Activated CD4-positive, alpha-beta memory T cell treated with anti-CD3 and anti-CD28 coated beads for 36 hours (primary cell): ENCODE measurements at regions of chr10 and their contacts with region 1.

Region 1: GRCh38 chr10:97572214-97572989 is at the start of gene ANKRD2:
- DNase-seq: peak; percentile 70
- H3K4me3 Mint-ChIP-seq: no peak within 1 kb of the TSS
- H3K27ac Mint-ChIP-seq: no peak within 1 kb of the TSS
- H3K4me1 Mint-ChIP-seq: no peaks in the 10 kb centered on the region
- H3K27me3 Mint-ChIP-seq: no peaks in the 10 kb centered on the region
- total RNA-seq, gene ANKRD2: not detected

Region 2: DNA sequence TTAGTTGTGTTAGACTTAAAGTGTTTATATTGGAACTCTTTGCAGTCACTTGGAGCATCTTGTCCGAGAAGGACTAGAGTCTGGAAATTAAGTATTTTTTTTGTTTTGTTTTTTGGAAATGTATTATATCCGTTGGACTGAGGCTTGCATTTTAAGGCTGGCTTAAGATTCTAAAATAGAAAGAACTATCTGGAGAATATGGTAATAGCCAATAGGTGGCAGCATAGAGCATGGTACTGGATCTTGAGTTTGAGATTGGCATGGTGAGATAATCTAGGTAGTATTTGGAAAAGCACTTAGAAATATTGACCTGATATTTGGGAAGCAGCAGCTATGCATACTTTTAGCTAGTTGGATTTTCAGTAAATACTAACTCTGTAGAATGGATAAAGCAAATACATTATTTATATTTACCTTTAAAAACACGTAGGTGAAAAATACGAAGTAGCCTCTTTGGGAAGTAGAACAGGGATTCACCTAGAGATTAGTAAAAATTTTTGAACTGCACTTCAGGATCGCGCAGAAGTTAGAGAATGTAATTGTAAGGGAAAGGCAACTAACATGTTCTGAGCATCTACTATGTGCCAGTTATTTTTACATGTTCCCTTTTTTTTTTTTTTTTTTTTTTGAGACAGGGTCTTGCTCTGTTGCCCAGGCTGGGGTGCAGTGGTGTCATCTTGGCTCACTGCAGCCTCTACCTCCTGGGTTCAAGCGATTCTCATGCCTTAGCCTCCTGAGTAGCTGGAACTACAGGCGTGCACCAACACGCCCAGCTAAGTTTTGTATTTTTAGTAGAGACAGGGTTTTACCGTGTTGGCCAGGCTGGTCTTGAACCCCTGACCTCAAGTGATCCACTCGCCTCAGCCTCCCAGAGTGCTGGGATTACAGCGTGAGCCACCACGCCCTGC is 661.7 kb before region 1 on chr10:
- CTCF ChIA-PET with region 1: no interaction called
- POLR2A ChIA-PET with region 1: no interaction called
- intact Hi-C with region 1: no loop called
- DNase-seq: no peak
- H3K4me3 Mint-ChIP-seq: no peak overlapping the region
- H3K27ac Mint-ChIP-seq: no peak overlapping the region
- H3K4me1 Mint-ChIP-seq: peaks cover 23% of the 10 kb centered on the region
- H3K27me3 Mint-ChIP-seq: no peaks in the 10 kb centered on the region

Region 3: GRCh38 chr10:97534746-97535367 is 37.5 kb before region 1 on chr10:
- CTCF ChIA-PET with region 1: interaction called, 18 read pairs
- POLR2A ChIA-PET with region 1: no interaction called
- intact Hi-C with region 1: no loop called
- DNase-seq: peak; percentile 65
- H3K4me3 Mint-ChIP-seq: no peak overlapping the region
- H3K27ac Mint-ChIP-seq: no peak overlapping the region
- H3K4me1 Mint-ChIP-seq: no peaks in the 10 kb centered on the region
- H3K27me3 Mint-ChIP-seq: no peaks in the 10 kb centered on the region

Region 4: GRCh38 chr10:97553575-97554031 is 18.8 kb before region 1 on chr10:
- CTCF ChIA-PET with region 1: interaction called, 11 read pairs
- POLR2A ChIA-PET with region 1: no interaction called
- intact Hi-C with region 1: no loop called
- DNase-seq: peak; percentile 75
- H3K4me3 Mint-ChIP-seq: no peak overlapping the region
- H3K27ac Mint-ChIP-seq: no peak overlapping the region
- H3K4me1 Mint-ChIP-seq: no peaks in the 10 kb centered on the region
- H3K27me3 Mint-ChIP-seq: no peaks in the 10 kb centered on the region

Region 5: DNA sequence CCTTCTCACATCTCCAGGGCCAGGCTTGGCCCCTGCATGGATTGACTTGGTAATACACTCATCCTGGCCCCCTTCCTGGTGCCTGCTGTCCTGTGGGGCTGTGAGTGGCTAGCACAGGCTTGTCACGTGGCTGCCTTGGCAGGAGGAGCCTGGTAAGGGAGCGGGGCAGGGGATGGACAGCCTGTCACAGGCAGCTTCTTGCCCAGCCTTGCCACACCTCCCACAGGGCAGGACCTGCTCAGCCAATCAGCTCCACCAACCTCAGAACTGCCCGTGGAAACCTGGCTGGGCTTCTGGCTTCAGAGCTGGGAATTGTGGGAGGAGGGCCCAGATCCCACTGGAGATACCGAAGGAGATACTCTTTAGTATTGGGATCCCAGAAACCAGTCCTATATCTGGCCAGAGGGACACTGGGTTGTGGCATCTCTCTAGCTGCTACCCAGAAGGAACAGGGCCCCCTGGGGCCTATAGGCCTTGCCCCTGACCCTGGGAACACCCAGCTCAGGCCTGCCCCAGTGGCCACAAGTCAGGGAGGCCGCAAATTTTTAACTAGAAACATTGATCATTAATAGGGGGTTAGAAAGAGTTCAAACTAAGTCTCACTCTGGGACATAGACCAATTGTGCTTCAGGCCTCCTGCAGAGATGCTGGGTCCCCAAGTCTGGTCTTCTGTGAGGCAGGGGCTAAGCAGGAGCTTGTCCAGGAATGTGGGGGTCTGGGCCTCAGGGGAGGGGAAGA is 11.8 kb after region 1 on chr10 and contains the start of gene HOGA1:
- CTCF ChIA-PET with region 1: interaction called, 12 read pairs
- POLR2A ChIA-PET with region 1: no interaction called
- intact Hi-C with region 1: no loop called
- DNase-seq: no peak
- H3K4me3 Mint-ChIP-seq: no peak within 1 kb of the TSS
- H3K27ac Mint-ChIP-seq: no peak within 1 kb of the TSS
- H3K4me1 Mint-ChIP-seq: no peaks in the 10 kb centered on the region
- H3K27me3 Mint-ChIP-seq: no peaks in the 10 kb centered on the region
- total RNA-seq, gene HOGA1: not detected

Region 6: GRCh38 chr10:97612386-97612785 is 40.0 kb after region 1 on chr10:
- CTCF ChIA-PET with region 1: interaction called, 16 read pairs
- POLR2A ChIA-PET with region 1: no interaction called
- intact Hi-C with region 1: loop called (anchors 2 kb)
- DNase-seq: no peak
- H3K4me3 Mint-ChIP-seq: no peak overlapping the region
- H3K27ac Mint-ChIP-seq: no peak overlapping the region
- H3K4me1 Mint-ChIP-seq: no peaks in the 10 kb centered on the region
- H3K27me3 Mint-ChIP-seq: no peaks in the 10 kb centered on the region

Region 7: GRCh38 chr10:97640174-97640867 is 67.9 kb after region 1 on chr10 and contains the start of gene PI4K2A:
- CTCF ChIA-PET with region 1: interaction called, 7 read pairs
- POLR2A ChIA-PET with region 1: no interaction called
- intact Hi-C with region 1: loop called (anchors 2 kb)
- DNase-seq: peak; percentile 100
- H3K4me3 Mint-ChIP-seq: peak within 1 kb of the TSS; percentile 97
- H3K27ac Mint-ChIP-seq: peak within 1 kb of the TSS; percentile 79
- H3K4me1 Mint-ChIP-seq: peaks cover 17% of the 10 kb centered on the region
- H3K27me3 Mint-ChIP-seq: no peaks in the 10 kb centered on the region
- total RNA-seq, gene PI4K2A: 13.1 to 13.2 TPM

Region 8: DNA sequence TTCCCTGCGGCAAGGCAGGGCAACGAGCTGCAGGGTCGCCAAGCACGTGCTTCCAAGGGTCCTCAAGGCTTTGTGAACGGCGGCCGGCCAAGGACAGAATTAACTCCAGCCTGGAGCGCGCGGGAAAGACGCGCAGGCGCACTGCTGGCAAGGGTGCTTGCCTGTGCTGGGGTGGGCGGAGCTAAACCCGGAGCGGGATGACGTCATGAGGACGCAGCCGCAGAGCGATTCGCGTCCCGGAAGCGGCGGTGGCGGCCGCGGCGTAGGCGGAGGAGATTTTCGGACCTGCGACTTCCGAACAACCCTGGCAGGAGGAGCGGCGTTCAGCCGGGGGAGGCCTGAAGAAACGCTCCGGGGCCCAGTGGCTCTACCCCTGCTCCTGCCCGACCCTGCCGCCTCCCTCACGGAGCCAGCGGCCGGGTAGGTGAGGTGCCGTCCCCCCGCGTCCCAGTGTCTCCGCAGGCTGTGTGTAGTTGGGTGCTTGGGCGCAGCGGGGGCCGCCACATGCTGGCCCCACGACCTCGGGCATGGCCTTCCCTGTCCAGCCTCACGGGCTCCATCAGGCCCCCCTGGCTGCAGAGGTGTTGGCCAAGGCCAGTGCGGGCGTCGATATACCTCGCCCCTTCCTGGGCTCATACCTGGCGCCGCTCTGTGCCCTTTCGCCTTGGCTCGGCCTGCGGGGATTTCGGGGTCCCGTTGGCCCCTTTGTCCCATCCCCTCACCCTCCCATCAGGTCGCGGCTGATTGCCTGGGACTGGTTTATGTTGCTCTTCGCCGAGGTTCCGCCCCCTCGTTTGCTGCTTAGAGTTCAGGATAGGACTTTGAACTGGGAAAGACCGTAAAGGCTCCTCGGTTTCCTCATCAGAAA is 164.7 kb after region 1 on chr10 and contains the start of gene ZFYVE27:
- CTCF ChIA-PET with region 1: interaction called, 6 read pairs
- POLR2A ChIA-PET with region 1: no interaction called
- intact Hi-C with region 1: loop called (anchors 10 kb)
- DNase-seq: peak; percentile 98
- H3K4me3 Mint-ChIP-seq: peak within 1 kb of the TSS; percentile 95
- H3K27ac Mint-ChIP-seq: peak within 1 kb of the TSS; percentile 89
- H3K4me1 Mint-ChIP-seq: peaks cover 41% of the 10 kb centered on the region
- H3K27me3 Mint-ChIP-seq: no peaks in the 10 kb centered on the region
- total RNA-seq, gene ZFYVE27: 20.9 to 22.8 TPM

Region 9: GRCh38 chr10:97762816-97763215 is 190.4 kb after region 1 on chr10:
- CTCF ChIA-PET with region 1: no interaction called
- POLR2A ChIA-PET with region 1: no interaction called
- intact Hi-C with region 1: no loop called
- DNase-seq: no peak
- H3K4me3 Mint-ChIP-seq: no peak overlapping the region
- H3K27ac Mint-ChIP-seq: no peak overlapping the region
- H3K4me1 Mint-ChIP-seq: no peaks in the 10 kb centered on the region
- H3K27me3 Mint-ChIP-seq: peaks cover 2% of the 10 kb centered on the region